Endothelial cell of umbilical vein (primary cell): ENCODE measurements at regions of chr2 and their contacts with region 1.

Region 1: DNA sequence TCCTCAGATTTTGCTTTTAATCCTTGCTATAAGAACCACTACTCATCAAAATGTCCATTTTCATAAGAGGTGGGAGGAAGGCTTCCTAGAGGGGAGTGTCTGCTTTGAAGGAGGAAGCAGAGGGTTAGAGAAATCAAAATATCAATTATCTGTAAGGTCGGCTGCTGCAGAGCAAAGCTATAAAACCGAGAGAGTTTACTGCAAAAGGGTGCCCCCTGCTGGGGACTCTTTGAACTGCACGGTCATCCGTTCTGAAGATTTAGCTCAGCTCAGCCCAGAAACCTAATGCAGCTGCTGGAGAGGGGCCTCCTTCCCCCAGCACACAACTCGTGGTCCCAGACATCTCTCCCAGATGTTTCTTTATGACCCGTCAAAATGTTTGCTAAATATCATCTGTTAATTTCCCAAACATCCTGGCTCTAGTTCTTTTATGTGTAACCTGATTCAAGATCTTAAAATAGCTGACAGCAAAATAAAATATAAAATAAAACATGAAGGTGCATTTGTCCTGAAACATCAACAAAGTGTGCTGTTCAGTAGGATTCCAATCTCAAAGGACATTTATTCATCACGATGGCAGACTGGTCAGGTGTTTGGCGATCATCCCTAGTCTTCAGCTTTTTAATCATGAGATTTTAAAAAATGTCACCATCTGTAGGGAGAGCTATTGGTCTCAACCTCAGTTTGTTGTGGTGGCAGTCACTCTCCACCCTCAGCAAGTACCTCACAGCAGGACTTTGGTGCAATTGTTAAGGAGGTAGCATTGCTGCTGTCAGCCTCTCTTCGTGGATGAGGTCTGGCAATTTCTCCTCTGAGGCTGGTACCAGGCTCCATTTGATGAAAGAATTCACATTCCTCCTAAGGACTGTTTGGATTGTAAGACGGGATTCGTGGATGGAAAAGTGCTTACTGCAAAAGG is 185.9 kb downstream of the MTX2 start:
- DNase-seq: peak; percentile 87
- H3K4me3 ChIP-seq: no peak overlapping the region
- H3K27ac ChIP-seq: no peak overlapping the region
- H3K4me1 ChIP-seq: peaks cover 3% of the 10 kb centered on the region
- H3K27me3 ChIP-seq: no peaks in the 10 kb centered on the region
- CTCF ChIP-seq: peak; percentile 78 to 82
- POLR2A ChIP-seq: no peak

Region 2: GRCh38 chr2:176151442-176152369 is 303.4 kb before region 1 on chr2 and contains the start of gene HOXD4:
- CTCF ChIA-PET with region 1: interaction called, 338 read pairs
- POLR2A ChIA-PET with region 1: no interaction called
- dilution Hi-C with region 1: no loop called
- intact Hi-C with region 1: no loop called
- DNase-seq: no peak
- H3K4me3 ChIP-seq: no peak within 1 kb of the TSS
- H3K27ac ChIP-seq: no peak within 1 kb of the TSS
- H3K4me1 ChIP-seq: no peaks in the 10 kb centered on the region
- H3K27me3 ChIP-seq: no peaks in the 10 kb centered on the region
- CTCF ChIP-seq: no peak
- POLR2A ChIP-seq: no peak
- total RNA-seq, gene HOXD4: 11.5 and 13.7 TPM in 2 replicates

Region 3: DNA sequence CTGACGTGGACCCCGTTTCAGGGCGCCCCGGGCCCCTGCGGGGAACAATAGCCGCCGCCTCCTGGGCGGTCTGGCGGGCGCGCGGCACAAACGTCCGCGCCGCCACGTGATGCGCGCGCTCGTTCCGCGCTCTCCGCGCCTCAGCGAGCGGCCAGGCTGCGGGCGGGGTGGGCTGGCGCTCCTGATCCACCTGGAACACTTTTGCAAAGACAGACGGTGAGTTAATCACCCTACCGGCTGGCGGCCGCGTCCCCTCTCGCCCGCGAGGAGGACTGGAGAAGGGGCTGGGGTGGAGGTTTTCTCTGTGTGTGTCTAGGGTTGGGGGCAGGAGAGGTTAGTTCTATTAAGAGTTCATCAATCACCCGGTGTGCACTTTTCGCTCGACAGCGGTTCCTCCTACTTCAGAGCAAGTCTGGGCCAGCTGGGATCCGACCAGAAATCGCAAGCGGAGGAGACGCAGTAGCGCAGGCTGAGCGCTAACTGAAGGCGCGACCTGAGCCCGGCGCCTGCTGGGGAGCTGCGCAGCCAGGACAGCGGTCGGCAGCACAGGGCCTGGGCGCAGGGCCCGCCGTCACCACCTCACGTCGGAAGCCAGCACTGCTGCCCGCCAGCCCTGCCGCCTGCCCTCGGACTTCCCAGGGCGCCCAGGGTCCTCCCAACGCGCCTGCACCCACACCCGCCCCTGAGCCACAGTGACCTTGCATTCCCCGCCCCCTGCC is 277.0 kb before region 1 on chr2:
- CTCF ChIA-PET with region 1: interaction called, 58 read pairs
- POLR2A ChIA-PET with region 1: no interaction called
- dilution Hi-C with region 1: no loop called
- intact Hi-C with region 1: loop called (anchors 2 kb)
- DNase-seq: peak; percentile 68
- H3K4me3 ChIP-seq: peak overlapping the region; percentile 33 to 49 (median 48)
- H3K27ac ChIP-seq: peak overlapping the region; percentile 77
- H3K4me1 ChIP-seq: peaks cover 30% of the 10 kb centered on the region
- H3K27me3 ChIP-seq: no peaks in the 10 kb centered on the region
- CTCF ChIP-seq: no peak
- POLR2A ChIP-seq: no peak

Region 4: GRCh38 chr2:176269319-176270099 is 185.6 kb before region 1 on chr2 and contains the start of gene MTX2:
- CTCF ChIA-PET with region 1: interaction called, 25 read pairs
- POLR2A ChIA-PET with region 1: no interaction called
- dilution Hi-C with region 1: no loop called
- intact Hi-C with region 1: no loop called
- DNase-seq: peak; percentile 78
- H3K4me3 ChIP-seq: peak within 1 kb of the TSS; percentile 73 to 87 (median 77)
- H3K27ac ChIP-seq: peak within 1 kb of the TSS; percentile 77
- H3K4me1 ChIP-seq: peaks cover 8% of the 10 kb centered on the region
- H3K27me3 ChIP-seq: no peaks in the 10 kb centered on the region
- CTCF ChIP-seq: peak in 1 of 2 donors; percentile 10
- POLR2A ChIP-seq: peak; percentile 88
- total RNA-seq, gene MTX2: 31.3 and 31.7 TPM in 2 replicates

Region 5: GRCh38 chr2:176325732-176326131 is 129.4 kb before region 1 on chr2:
- CTCF ChIA-PET with region 1: interaction called, 16 read pairs
- POLR2A ChIA-PET with region 1: no interaction called
- dilution Hi-C with region 1: no loop called
- intact Hi-C with region 1: no loop called
- DNase-seq: peak; percentile 15
- H3K4me3 ChIP-seq: no peak overlapping the region
- H3K27ac ChIP-seq: no peak overlapping the region
- H3K4me1 ChIP-seq: no peaks in the 10 kb centered on the region
- H3K27me3 ChIP-seq: no peaks in the 10 kb centered on the region
- CTCF ChIP-seq: no peak
- POLR2A ChIP-seq: no peak

Region 6: DNA sequence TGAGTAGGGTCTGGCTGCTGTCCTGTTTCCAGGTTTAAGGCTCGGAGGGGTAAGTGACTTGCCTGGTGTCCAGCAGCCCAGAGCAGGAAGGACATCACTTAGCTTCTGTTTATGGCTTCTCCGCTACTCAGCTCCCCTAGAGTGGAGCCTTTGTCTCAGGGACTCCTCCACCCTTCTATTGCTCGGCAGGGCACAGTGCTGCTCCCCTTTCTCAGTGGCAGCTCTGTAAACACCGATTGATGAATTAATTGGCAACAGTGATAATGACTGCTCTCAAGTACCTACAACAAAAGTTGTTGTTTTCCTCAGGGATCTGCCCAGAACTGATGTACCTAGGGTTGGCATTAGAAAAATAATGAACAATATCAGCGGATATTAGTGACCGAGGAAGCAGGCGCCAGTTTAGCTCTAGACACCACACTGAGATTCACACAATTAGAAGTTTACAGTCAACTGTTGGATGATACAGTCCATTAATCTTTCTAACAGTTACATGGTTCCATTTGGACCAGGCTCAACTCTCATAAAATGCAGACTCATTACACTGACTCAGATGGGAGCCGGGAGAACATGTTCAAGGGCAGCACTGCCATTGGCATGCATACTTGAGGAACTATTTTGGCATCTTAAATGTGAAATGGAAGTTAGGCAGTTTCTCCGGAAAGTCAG is 79.8 kb after region 1 on chr2:
- CTCF ChIA-PET with region 1: interaction called, 11 read pairs
- POLR2A ChIA-PET with region 1: no interaction called
- dilution Hi-C with region 1: no loop called
- intact Hi-C with region 1: no loop called
- DNase-seq: no peak
- H3K4me3 ChIP-seq: no peak overlapping the region
- H3K27ac ChIP-seq: no peak overlapping the region
- H3K4me1 ChIP-seq: no peaks in the 10 kb centered on the region
- H3K27me3 ChIP-seq: no peaks in the 10 kb centered on the region
- CTCF ChIP-seq: no peak
- POLR2A ChIP-seq: no peak

Region 7: DNA sequence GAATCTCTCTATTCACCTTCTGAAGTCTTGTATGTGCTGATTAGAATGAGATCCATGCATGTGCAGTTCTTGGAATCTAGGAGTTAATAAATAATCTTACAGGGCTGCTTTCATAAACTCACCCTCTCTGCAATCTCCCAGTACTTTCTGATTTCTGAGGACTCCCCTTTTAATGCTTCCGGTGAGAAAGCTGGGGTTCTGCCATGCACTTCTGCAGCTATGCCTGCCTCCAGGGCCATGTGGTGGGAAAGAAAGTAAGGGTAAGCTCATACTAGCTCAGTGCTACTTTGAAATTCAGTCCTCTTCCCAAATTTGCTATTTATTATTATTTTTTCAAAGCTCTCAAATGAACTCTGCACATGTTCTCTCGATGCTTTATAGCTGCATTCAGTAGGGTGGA is 247.0 kb after region 1 on chr2:
- CTCF ChIA-PET with region 1: no interaction called
- POLR2A ChIA-PET with region 1: no interaction called
- dilution Hi-C with region 1: no loop called
- intact Hi-C with region 1: no loop called
- DNase-seq: no peak
- H3K4me3 ChIP-seq: no peak overlapping the region
- H3K27ac ChIP-seq: no peak overlapping the region
- H3K4me1 ChIP-seq: no peaks in the 10 kb centered on the region
- H3K27me3 ChIP-seq: peaks cover 0 to 3% of the 10 kb centered on the region in 2 experiments
- CTCF ChIP-seq: no peak
- POLR2A ChIP-seq: no peak

Region 8: GRCh38 chr2:176814306-176815052 is 359.3 kb after region 1 on chr2:
- CTCF ChIA-PET with region 1: interaction called, 3 read pairs
- POLR2A ChIA-PET with region 1: no interaction called
- dilution Hi-C with region 1: no loop called
- intact Hi-C with region 1: loop called (anchors 10 kb)
- DNase-seq: peak; percentile 38
- H3K4me3 ChIP-seq: no peak overlapping the region
- H3K27ac ChIP-seq: no peak overlapping the region
- H3K4me1 ChIP-seq: no peaks in the 10 kb centered on the region
- H3K27me3 ChIP-seq: peaks cover 0 to 9% of the 10 kb centered on the region in 2 experiments
- CTCF ChIP-seq: peak; percentile 16 to 17
- POLR2A ChIP-seq: no peak